Posterior vena cava (tissue), 2 donors: ENCODE measurements at regions of chr4 and their contacts with region 1.

Region 1: DNA sequence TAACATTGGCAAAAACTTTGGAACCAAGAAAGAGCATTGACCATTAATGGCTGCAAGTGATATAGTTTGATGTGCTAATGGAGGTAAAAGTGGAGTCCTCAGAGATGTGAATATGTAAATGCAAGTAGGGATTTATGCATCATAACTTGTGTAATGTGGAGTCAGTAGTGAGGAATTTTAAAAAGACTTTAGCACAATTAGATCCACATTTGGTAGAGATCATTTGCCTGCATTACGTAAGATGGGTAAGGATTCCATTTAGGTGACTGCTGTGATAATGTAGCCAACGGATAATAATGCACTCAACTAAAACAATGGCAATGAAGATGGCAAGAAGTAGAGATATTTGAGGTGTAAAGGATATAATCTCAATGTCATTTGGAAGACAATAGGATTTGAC is 1128.4 kb downstream of the ADGRL3 start:
- DNase-seq: no peak

Region 2: GRCh38 chr4:62342346-62342745 is 13.8 kb after region 1 on chr4:
- intact Hi-C with region 1: loop called in 1 of 2 experiments (anchors 1 kb)
- DNase-seq: no peak